ENCODE measurements at regions of chr12 and their contacts with region 1.

Region 1: GRCh38 chr12:89244536-89244935 is 107.8 kb downstream of the DUSP6 start:
- DNase-seq: peak in 1 of 2 donors; percentile 44
- ATAC-seq: peak; percentile 65 to 82 (median 69)
- H3K4me3 ChIP-seq: no peak overlapping the region
- H3K4me3 Mint-ChIP-seq: peak overlapping the region; percentile 57
- H3K27ac ChIP-seq: peak overlapping the region; percentile 34
- H3K27ac Mint-ChIP-seq: peak overlapping the region; percentile 36 to 52
- H3K4me1 ChIP-seq: peaks cover 11% of the 10 kb centered on the region
- H3K4me1 Mint-ChIP-seq: peaks cover 29 to 33% of the 10 kb centered on the region in 2 donors
- H3K27me3 ChIP-seq: no peaks in the 10 kb centered on the region
- H3K27me3 Mint-ChIP-seq: no peaks in the 10 kb centered on the region
- CTCF ChIP-seq: no peak

Region 2: DNA sequence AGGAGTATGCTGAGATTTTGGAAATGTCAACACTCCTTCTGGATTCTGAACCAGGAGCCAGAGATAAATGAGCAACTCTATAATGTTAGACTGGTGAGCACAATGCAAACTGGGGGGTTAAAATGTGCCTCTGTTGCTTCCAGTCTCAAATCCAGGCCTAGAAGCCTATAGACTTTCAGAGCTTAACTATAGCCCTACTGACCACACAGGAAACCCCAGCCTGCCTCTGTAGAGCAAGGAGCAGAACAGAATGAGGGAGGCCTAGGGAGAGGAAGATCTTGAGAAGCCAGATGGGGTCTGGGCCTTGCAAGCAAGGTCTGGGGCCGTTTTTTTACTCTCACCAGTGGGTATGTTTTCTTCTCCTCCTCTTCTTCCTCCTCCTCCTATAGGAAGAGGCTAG is 438.8 kb before region 1 on chr12:
- intact Hi-C with region 1: no loop called
- DNase-seq: no peak
- ATAC-seq: no peak
- H3K4me3 ChIP-seq: no peak overlapping the region
- H3K4me3 Mint-ChIP-seq: no peak overlapping the region
- H3K27ac ChIP-seq: no peak overlapping the region
- H3K27ac Mint-ChIP-seq: no peak overlapping the region
- H3K4me1 ChIP-seq: no peaks in the 10 kb centered on the region
- H3K4me1 Mint-ChIP-seq: no peaks in the 10 kb centered on the region
- H3K27me3 ChIP-seq: no peaks in the 10 kb centered on the region
- H3K27me3 Mint-ChIP-seq: no peaks in the 10 kb centered on the region
- CTCF ChIP-seq: no peak

Region 3: GRCh38 chr12:89051065-89051677 is 193.4 kb before region 1 on chr12:
- intact Hi-C with region 1: loop called (anchors 10 kb)
- DNase-seq: peak in 1 of 2 donors; percentile 76
- ATAC-seq: peak; percentile 61 to 78 (median 76)
- H3K4me3 ChIP-seq: no peak overlapping the region
- H3K4me3 Mint-ChIP-seq: no peak overlapping the region
- H3K27ac ChIP-seq: no peak overlapping the region
- H3K27ac Mint-ChIP-seq: no peak overlapping the region
- H3K4me1 ChIP-seq: no peaks in the 10 kb centered on the region
- H3K4me1 Mint-ChIP-seq: no peaks in the 10 kb centered on the region
- H3K27me3 ChIP-seq: no peaks in the 10 kb centered on the region
- H3K27me3 Mint-ChIP-seq: no peaks in the 10 kb centered on the region
- CTCF ChIP-seq: peak; percentile 97

Region 4: GRCh38 chr12:89126712-89127111 is 117.8 kb before region 1 on chr12:
- intact Hi-C with region 1: no loop called
- DNase-seq: no peak
- ATAC-seq: no peak
- H3K4me3 ChIP-seq: no peak overlapping the region
- H3K4me3 Mint-ChIP-seq: no peak overlapping the region
- H3K27ac ChIP-seq: no peak overlapping the region
- H3K27ac Mint-ChIP-seq: no peak overlapping the region
- H3K4me1 ChIP-seq: no peaks in the 10 kb centered on the region
- H3K4me1 Mint-ChIP-seq: no peaks in the 10 kb centered on the region
- H3K27me3 ChIP-seq: no peaks in the 10 kb centered on the region
- H3K27me3 Mint-ChIP-seq: no peaks in the 10 kb centered on the region
- CTCF ChIP-seq: no peak

Region 5: GRCh38 chr12:89212339-89212771 is 32.2 kb before region 1 on chr12:
- intact Hi-C with region 1: no loop called
- DNase-seq: no peak
- ATAC-seq: no peak
- H3K4me3 ChIP-seq: no peak overlapping the region
- H3K4me3 Mint-ChIP-seq: no peak overlapping the region
- H3K27ac ChIP-seq: no peak overlapping the region
- H3K27ac Mint-ChIP-seq: no peak overlapping the region
- H3K4me1 ChIP-seq: no peaks in the 10 kb centered on the region
- H3K4me1 Mint-ChIP-seq: peaks cover 0 to 5% of the 10 kb centered on the region in 2 donors
- H3K27me3 ChIP-seq: no peaks in the 10 kb centered on the region
- H3K27me3 Mint-ChIP-seq: peaks cover 0 to 5% of the 10 kb centered on the region in 2 donors
- CTCF ChIP-seq: no peak